GM23248 (cell line): ENCODE measurements at regions of chr17 and their contacts with region 1.

Region 1: GRCh38 chr17:72730077-72730476 is 362.4 kb downstream of the SLC39A11 start:
- DNase-seq: no peak
- H3K4me3 ChIP-seq: no peak overlapping the region
- H3K27ac ChIP-seq: no peak overlapping the region
- H3K4me1 ChIP-seq: no peaks in the 10 kb centered on the region
- H3K27me3 ChIP-seq: no peaks in the 10 kb centered on the region

Region 2: GRCh38 chr17:73189417-73190099 is 459.5 kb after region 1 on chr17:
- in situ Hi-C with region 1: loop called (anchors 10 kb)
- DNase-seq: peak; percentile 64
- H3K4me3 ChIP-seq: no peak overlapping the region
- H3K27ac ChIP-seq: no peak overlapping the region
- H3K4me1 ChIP-seq: peaks cover 2% of the 10 kb centered on the region
- H3K27me3 ChIP-seq: no peaks in the 10 kb centered on the region